MCF 10A (cell line): ENCODE measurements at regions of chr15 and their contacts with region 1.

Region 1: DNA sequence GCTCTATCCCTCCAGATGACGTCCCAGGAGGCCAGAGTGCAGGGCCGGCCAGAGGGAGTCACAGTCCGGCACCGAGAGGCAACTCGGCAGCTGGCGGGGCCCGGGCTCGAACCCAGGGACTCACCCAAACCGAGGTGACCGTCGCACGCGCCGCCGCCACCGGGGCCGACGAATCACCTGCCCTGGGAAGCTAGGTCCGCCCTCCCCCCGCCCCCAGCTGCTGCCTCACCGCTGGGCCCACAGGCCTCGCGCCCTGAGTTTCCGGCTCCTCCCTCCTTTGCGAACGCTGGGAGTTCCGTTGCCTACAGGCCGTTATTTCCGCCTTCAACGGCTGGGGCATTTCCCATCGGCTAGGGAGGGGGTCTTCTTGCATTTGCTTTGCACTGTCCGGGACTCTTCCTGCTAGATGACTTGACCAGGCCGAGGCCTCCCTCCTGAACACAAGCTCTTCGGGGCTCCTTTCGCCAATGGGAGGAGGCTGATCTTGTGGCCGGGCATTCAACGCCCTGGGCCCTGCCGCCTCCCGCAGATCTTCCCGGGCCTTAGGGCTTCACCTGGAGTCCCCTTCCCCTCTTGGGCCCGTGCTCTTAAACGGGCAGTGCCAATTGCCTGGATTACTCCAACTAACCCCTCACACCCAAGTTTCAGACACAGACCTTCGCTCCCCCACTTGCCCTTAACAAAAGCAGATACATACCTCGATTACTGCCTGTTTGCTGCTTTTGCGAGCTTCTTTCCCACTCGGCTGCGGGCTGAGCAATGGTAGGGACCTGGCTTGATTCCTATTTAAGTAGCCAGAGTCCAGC is at the start of gene SNUPN:
- DNase-seq: peak; percentile 94
- H3K4me3 Mint-ChIP-seq: peak within 1 kb of the TSS; percentile 87
- H3K27ac Mint-ChIP-seq: peak within 1 kb of the TSS; percentile 95
- H3K4me1 Mint-ChIP-seq: peaks cover 15% of the 10 kb centered on the region
- H3K27me3 Mint-ChIP-seq: no peaks in the 10 kb centered on the region
- CTCF ChIP-seq: no peak
- total RNA-seq, gene SNUPN: 23.9 and 28.9 TPM in 2 replicates

Region 2: GRCh38 chr15:74978503-74978902 is 647.2 kb before region 1 on chr15:
- CTCF ChIA-PET with region 1: no interaction called
- POLR2A ChIA-PET with region 1: no interaction called
- intact Hi-C with region 1: no loop called
- DNase-seq: no peak
- H3K4me3 Mint-ChIP-seq: no peak overlapping the region
- H3K27ac Mint-ChIP-seq: no peak overlapping the region
- H3K4me1 Mint-ChIP-seq: peaks cover under 1% of the 10 kb centered on the region
- H3K27me3 Mint-ChIP-seq: peaks cover 12% of the 10 kb centered on the region
- CTCF ChIP-seq: no peak

Region 3: GRCh38 chr15:75508840-75509532 is 116.8 kb before region 1 on chr15:
- CTCF ChIA-PET with region 1: interaction called, 8 read pairs
- POLR2A ChIA-PET with region 1: interaction called, 5 read pairs
- intact Hi-C with region 1: loop called (anchors 2 kb)
- DNase-seq: peak; percentile 53
- H3K4me3 Mint-ChIP-seq: no peak overlapping the region
- H3K27ac Mint-ChIP-seq: no peak overlapping the region
- H3K4me1 Mint-ChIP-seq: no peaks in the 10 kb centered on the region
- H3K27me3 Mint-ChIP-seq: no peaks in the 10 kb centered on the region
- CTCF ChIP-seq: peak; percentile 51

Region 4: DNA sequence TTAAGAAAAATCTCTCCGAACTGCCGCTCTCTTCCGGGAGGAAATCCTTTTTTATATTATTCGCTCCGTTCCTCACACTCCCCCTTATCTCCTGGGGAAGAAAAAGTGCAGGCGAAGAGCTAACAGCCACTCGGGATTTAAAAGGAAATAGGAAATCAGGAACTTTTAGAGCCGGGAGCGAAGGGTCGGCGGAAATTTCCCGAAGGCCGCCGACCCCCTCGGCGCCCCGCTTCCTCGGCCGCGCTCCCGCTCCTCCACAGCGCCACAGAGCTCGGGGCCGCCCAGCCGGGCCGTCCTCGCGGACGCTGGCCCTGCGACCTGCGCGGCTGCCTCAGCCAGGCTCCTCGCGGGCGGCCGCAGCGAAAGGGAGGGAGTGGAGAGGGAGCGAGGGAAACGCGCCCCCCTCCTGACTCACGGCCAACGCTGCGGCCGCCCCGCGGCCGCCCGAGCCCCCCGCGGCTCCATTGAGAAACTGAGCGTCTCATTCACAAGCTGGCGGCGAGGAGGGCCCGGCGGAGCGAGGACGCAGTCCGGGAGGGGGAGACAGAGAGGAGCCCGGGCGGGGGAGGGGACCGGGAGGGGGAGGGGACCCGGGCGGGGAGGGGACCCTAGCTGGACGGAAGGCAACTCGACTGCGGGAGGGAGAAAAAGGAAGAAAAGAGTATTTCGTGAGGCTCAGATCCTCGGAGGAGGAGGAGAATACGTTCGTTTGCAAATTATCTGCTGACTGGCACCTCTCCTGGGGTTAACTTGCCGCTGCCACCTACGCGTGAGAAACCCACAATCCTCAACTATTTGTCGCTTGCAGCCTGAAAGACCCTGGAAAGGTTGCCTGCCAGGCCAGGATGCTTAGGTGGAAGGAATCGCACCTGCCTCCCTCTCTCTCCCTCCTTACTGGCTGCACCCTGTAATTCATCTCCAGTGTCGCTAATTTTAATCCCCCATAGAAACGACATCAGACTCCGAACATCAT is 46.5 kb before region 1 on chr15 and contains the start of gene PTPN9:
- CTCF ChIA-PET with region 1: interaction called, 7 read pairs
- POLR2A ChIA-PET with region 1: interaction called, 24 read pairs
- intact Hi-C with region 1: loop called (anchors 2 kb)
- DNase-seq: peak; percentile 74
- H3K4me3 Mint-ChIP-seq: peak within 1 kb of the TSS; percentile 95
- H3K27ac Mint-ChIP-seq: peak within 1 kb of the TSS; percentile 97
- H3K4me1 Mint-ChIP-seq: peaks cover 9% of the 10 kb centered on the region
- H3K27me3 Mint-ChIP-seq: no peaks in the 10 kb centered on the region
- CTCF ChIP-seq: peak; percentile 54
- total RNA-seq, gene PTPN9: 31.6 and 33.0 TPM in 2 replicates

Region 5: GRCh38 chr15:75647370-75648155 is 21.8 kb after region 1 on chr15 and contains the start of gene SNX33:
- CTCF ChIA-PET with region 1: interaction called, 15 read pairs
- POLR2A ChIA-PET with region 1: interaction called, 158 read pairs
- intact Hi-C with region 1: no loop called
- DNase-seq: peak; percentile 77
- H3K4me3 Mint-ChIP-seq: peak within 1 kb of the TSS; percentile 87
- H3K27ac Mint-ChIP-seq: peak within 1 kb of the TSS; percentile 78
- H3K4me1 Mint-ChIP-seq: peaks cover 47% of the 10 kb centered on the region
- H3K27me3 Mint-ChIP-seq: no peaks in the 10 kb centered on the region
- CTCF ChIP-seq: peak; percentile 48
- total RNA-seq, gene SNX33: 14.3 and 15.2 TPM in 2 replicates

Region 6: GRCh38 chr15:75661091-75661777 is 35.5 kb after region 1 on chr15:
- CTCF ChIA-PET with region 1: interaction called, 3 read pairs
- POLR2A ChIA-PET with region 1: interaction called, 16 read pairs
- intact Hi-C with region 1: no loop called
- DNase-seq: peak; percentile 89
- H3K4me3 Mint-ChIP-seq: peak overlapping the region; percentile 40
- H3K27ac Mint-ChIP-seq: peak overlapping the region; percentile 97
- H3K4me1 Mint-ChIP-seq: peaks cover 47% of the 10 kb centered on the region
- H3K27me3 Mint-ChIP-seq: no peaks in the 10 kb centered on the region
- CTCF ChIP-seq: no peak

Region 7: DNA sequence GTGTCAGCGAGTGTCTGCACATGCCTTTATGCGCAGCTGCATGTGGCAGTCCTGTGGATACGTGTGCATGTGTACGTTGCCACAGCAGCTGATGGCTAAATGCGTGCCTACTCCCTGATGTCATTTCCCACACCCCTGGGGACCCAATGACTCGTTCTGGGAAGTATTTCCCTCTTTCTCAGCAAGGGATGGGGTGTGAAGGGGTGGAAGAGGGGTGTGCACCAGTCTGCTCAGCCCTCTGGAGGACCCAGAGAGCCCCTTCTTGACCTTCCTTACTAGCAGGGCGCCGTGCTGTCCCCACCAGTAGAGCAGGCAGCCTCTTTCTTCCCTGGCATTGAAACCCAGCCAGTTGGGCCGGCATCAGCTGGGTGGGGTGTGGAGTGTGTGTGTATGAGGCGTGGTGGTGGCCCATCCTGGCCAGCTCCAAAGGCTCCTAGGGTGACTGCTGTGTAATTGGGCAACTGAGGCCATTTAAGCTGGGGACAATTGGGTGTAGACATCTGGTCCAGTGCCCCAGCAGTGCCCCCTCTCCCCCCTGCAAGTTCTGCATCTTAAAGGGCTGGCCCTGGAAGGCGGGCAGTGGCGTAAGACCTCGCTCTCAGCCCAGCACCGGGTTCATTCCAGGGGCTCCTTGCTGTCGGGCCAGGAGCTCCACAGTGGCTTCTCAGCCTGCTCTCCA is 41.2 kb after region 1 on chr15:
- CTCF ChIA-PET with region 1: interaction called, 3 read pairs
- POLR2A ChIA-PET with region 1: interaction called, 16 read pairs
- intact Hi-C with region 1: no loop called
- DNase-seq: peak; percentile 93
- H3K4me3 Mint-ChIP-seq: peak overlapping the region; percentile 65
- H3K27ac Mint-ChIP-seq: peak overlapping the region; percentile 100
- H3K4me1 Mint-ChIP-seq: peaks cover 57% of the 10 kb centered on the region
- H3K27me3 Mint-ChIP-seq: no peaks in the 10 kb centered on the region
- CTCF ChIP-seq: no peak